OCI-LY7 (cell line): ENCODE measurements at regions of chrX and their contacts with region 1.

Region 1: DNA sequence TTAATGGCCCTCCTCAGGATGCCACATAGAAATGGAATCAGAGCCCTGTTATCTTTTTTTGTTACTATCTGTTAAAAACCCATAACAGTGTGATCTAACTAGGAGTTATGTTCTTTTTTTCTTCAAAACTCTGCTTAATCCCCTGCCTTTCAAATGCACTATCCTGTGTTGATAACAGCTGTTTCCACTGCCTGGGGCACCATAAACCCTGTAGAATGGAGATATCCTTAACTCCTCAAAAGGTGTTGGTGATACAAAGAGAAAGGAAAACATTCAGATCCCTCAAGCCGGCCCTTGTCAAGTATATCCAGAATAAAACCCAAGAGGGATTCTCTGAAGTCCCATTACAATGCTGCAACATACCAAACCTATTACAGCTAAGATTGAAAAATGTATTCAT is 108.6 kb downstream of the ACTRT1 start:
- DNase-seq: no peak
- H3K4me3 ChIP-seq: no peak overlapping the region
- H3K27ac ChIP-seq: no peak overlapping the region
- H3K4me1 ChIP-seq: no peaks in the 10 kb centered on the region
- CTCF ChIP-seq: no peak

Region 2: DNA sequence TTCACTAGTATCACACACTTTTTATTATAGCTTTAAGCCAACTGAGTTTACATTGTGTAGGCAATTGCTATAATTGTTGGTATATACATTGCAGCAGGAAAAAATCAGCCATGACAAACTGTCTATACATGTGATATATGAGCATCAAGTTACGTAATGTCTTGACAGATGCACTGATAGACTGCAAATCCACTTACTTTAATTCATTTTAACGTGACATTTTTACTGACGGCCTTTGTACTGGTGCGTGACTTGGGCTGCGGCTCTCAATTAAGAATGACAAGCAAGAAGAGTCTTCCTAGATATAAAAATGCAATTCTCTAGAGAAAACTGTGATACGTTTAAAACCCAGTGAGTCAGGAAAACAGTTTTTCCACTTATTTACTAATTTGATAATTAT is 35.2 kb before region 1 on chrX:
- CTCF ChIA-PET with region 1: no interaction called
- POLR2A ChIA-PET with region 1: no interaction called
- intact Hi-C with region 1: loop called (anchors 2 kb)
- DNase-seq: no peak
- H3K4me3 ChIP-seq: no peak overlapping the region
- H3K27ac ChIP-seq: no peak overlapping the region
- H3K4me1 ChIP-seq: no peaks in the 10 kb centered on the region
- CTCF ChIP-seq: no peak

Region 3: GRCh38 chrX:127963696-127964095 is 20.1 kb after region 1 on chrX:
- CTCF ChIA-PET with region 1: no interaction called
- POLR2A ChIA-PET with region 1: no interaction called
- intact Hi-C with region 1: no loop called
- DNase-seq: no peak
- H3K4me3 ChIP-seq: no peak overlapping the region
- H3K27ac ChIP-seq: no peak overlapping the region
- H3K4me1 ChIP-seq: no peaks in the 10 kb centered on the region
- CTCF ChIP-seq: no peak